Kidney (tissue), 22 donors: ENCODE measurements at regions of chr19 and their contacts with region 1.

Region 1: GRCh38 chr19:30229214-30230174 is 142.7 kb upstream of the ZNF536 start:
- DNase-seq: peak in 3 of 5 donors; percentile 60 to 69 (median 62)
- H3K4me3 ChIP-seq: peak overlapping the region in 1 of 3 donors; percentile 42
- H3K27ac ChIP-seq: no peak overlapping the region
- H3K4me1 ChIP-seq: peaks cover 0 to 2% (median 0%) of the 10 kb centered on the region in 3 donors
- H3K27me3 ChIP-seq: peaks cover 14% of the 10 kb centered on the region
- CTCF ChIP-seq: no peak

Region 2: DNA sequence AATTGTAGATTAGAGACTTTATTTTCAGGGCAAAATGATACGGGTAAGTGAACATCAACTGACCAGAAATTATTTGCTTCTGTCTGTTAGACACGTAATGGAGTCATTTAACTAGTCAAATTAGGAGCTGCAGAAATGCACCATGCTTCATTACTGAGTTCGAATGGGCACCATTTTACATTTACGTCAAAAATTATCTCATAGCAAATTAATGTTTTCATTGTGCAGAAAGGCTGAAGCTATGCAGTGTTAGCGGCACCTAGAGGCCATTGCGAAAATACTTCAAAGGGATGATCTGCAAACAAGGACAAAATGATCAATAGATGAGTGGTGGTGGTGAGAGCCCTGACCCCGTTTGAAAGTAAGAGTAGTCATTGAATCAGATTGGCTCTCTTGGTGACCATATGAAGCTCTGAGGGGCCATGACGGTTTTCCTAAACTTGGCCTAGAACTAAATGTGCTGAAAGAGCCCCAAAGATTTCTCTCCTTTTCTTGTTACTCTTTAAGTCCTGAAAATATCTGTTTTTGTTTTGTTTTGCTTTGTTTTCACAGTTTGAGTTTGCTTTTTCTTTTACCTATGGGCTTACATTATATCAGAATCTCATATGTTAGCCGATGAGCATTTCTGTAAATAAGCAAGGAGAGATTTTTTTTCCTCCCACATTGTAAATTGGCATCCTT is 420.6 kb after region 1 on chr19:
- intact Hi-C with region 1: loop called (anchors 10 kb)
- DNase-seq: peak in 3 of 5 donors; percentile 50 to 85 (median 71)
- H3K4me3 ChIP-seq: no peak overlapping the region
- H3K27ac ChIP-seq: no peak overlapping the region
- H3K4me1 ChIP-seq: no peaks in the 10 kb centered on the region
- H3K27me3 ChIP-seq: no peaks in the 10 kb centered on the region
- CTCF ChIP-seq: peak; percentile 70